ENCODE measurements at regions of chr3 and their contacts with region 1.

Region 1: DNA sequence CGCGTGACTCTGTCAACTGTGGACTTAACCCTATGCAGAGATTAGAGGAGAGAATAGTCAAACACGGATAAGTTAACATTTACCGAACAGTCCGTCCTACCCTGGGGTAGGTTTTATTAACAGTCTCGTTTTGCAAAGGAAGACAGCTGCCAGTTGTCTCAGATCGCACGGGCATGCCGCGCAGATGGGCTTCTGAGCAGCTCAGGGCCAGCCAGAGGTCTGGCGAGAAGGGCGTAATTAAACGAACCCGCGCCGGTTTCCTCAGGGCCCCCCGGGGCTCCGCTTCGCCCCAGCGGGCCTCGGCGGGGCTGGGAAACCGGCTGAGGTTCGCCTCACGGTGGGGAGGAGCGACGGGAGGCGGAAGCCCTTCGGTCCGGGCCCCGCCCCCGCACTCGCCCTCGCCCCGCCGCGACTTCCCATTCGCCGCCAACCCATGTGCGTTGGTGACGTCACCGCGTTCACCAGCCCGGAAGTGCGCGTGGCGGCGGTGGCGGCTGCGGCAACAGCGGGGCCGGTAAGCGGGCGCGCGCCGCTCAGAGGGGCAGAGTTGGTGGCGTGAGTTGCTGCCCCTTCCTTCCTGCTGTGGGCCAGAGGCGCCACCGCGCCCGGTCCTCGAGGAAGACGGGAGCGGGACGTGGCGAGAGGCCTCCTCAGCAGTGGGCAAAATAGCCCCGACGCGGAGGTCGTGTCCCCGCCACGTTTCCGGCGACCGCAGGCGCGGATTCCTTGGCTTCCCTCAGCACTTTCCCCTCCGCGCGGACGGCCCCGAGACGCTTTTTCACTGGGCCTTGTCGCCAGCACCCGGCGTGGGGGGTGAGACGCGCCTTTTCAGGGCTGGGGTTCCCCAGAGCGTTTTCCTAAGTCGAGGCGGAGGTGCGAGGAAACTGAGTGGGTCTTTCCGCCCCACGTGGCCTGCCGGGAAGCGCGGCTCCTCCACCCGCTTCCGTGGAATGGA is at the start of gene TRNT1:
- DNase-seq: peak; percentile 69
- ATAC-seq: peak; percentile 95
- H3K4me3 ChIP-seq: peak within 1 kb of the TSS; percentile 89
- H3K27ac ChIP-seq: peak within 1 kb of the TSS; percentile 87
- H3K4me1 ChIP-seq: peaks cover 9% of the 10 kb centered on the region; the same call in 1 of the 2 replicates
- H3K27me3 ChIP-seq: no peaks in the 10 kb centered on the region
- CTCF ChIP-seq: no peak
- EP300 ChIP-seq: no peak
- POLR2A ChIP-seq: peak; percentile 98
- RAD21 ChIP-seq: no peak
- polyA plus RNA-seq, gene TRNT1: 37.9 to 45.1 TPM

Region 2: GRCh38 chr3:3038201-3038991 is 88.4 kb before region 1 on chr3:
- CTCF ChIA-PET with region 1: no interaction called
- POLR2A ChIA-PET with region 1: no interaction called
- RAD21 ChIA-PET with region 1: no interaction called
- SMC1A ChIA-PET with region 1: no interaction called
- in situ Hi-C with region 1: no loop called
- intact Hi-C with region 1: loop called (anchors 5 kb)
- DNase-seq: peak; percentile 26
- ATAC-seq: peak; percentile 91
- H3K4me3 ChIP-seq: no peak overlapping the region
- H3K27ac ChIP-seq: no peak overlapping the region
- H3K4me1 ChIP-seq: no peaks in the 10 kb centered on the region; the same call in 1 of the 2 replicates
- H3K27me3 ChIP-seq: no peaks in the 10 kb centered on the region; a peak in 1 of 4 replicates
- CTCF ChIP-seq: no peak
- EP300 ChIP-seq: no peak
- POLR2A ChIP-seq: no peak
- RAD21 ChIP-seq: no peak

Region 3: GRCh38 chr3:3089017-3089416 is 37.7 kb before region 1 on chr3:
- CTCF ChIA-PET with region 1: no interaction called
- POLR2A ChIA-PET with region 1: interaction called, 4 read pairs
- RAD21 ChIA-PET with region 1: no interaction called
- SMC1A ChIA-PET with region 1: interaction called, 4 read pairs
- in situ Hi-C with region 1: no loop called
- intact Hi-C with region 1: loop called (anchors 2 kb)
- DNase-seq: peak; percentile 71
- ATAC-seq: peak; percentile 99
- H3K4me3 ChIP-seq: no peak overlapping the region
- H3K27ac ChIP-seq: no peak overlapping the region
- H3K4me1 ChIP-seq: peaks cover 22% of the 10 kb centered on the region
- H3K27me3 ChIP-seq: no peaks in the 10 kb centered on the region
- CTCF ChIP-seq: peak in 2 of 3 experiments; percentile 22 to 48; a peak in 4 of 6 replicates
- EP300 ChIP-seq: peak in 1 of 2 experiments; percentile 92; a peak in 2 of 4 replicates
- POLR2A ChIP-seq: no peak
- RAD21 ChIP-seq: 0 out of 2 replicates have a peak, but pooled peaks have one; percentile 9

Region 4: GRCh38 chr3:3179407-3180094 is 52.8 kb after region 1 on chr3 and contains the start of gene CRBN:
- CTCF ChIA-PET with region 1: no interaction called
- POLR2A ChIA-PET with region 1: no interaction called
- RAD21 ChIA-PET with region 1: no interaction called
- SMC1A ChIA-PET with region 1: no interaction called
- in situ Hi-C with region 1: no loop called
- intact Hi-C with region 1: loop called (anchors 2 kb)
- DNase-seq: peak; percentile 41
- ATAC-seq: peak; percentile 99
- H3K4me3 ChIP-seq: peak within 1 kb of the TSS; percentile 88
- H3K27ac ChIP-seq: peak within 1 kb of the TSS; percentile 67
- H3K4me1 ChIP-seq: peaks cover 8% of the 10 kb centered on the region
- H3K27me3 ChIP-seq: peaks cover 0 to 2% of the 10 kb centered on the region in 2 experiments; a peak in 1 of 4 replicates
- CTCF ChIP-seq: peak; percentile 94 to 98 (median 98)
- EP300 ChIP-seq: no peak
- POLR2A ChIP-seq: peak; percentile 98
- RAD21 ChIP-seq: peak; percentile 70
- polyA plus RNA-seq, gene CRBN: 110 to 115 TPM

Region 5: GRCh38 chr3:3545360-3545759 is 418.6 kb after region 1 on chr3:
- CTCF ChIA-PET with region 1: no interaction called
- POLR2A ChIA-PET with region 1: no interaction called
- RAD21 ChIA-PET with region 1: no interaction called
- SMC1A ChIA-PET with region 1: no interaction called
- in situ Hi-C with region 1: no loop called
- intact Hi-C with region 1: no loop called
- DNase-seq: no peak
- ATAC-seq: no peak
- H3K4me3 ChIP-seq: no peak overlapping the region
- H3K27ac ChIP-seq: no peak overlapping the region
- H3K4me1 ChIP-seq: no peaks in the 10 kb centered on the region
- H3K27me3 ChIP-seq: no peaks in the 10 kb centered on the region
- CTCF ChIP-seq: no peak
- EP300 ChIP-seq: no peak
- POLR2A ChIP-seq: no peak
- RAD21 ChIP-seq: no peak

Region 6: DNA sequence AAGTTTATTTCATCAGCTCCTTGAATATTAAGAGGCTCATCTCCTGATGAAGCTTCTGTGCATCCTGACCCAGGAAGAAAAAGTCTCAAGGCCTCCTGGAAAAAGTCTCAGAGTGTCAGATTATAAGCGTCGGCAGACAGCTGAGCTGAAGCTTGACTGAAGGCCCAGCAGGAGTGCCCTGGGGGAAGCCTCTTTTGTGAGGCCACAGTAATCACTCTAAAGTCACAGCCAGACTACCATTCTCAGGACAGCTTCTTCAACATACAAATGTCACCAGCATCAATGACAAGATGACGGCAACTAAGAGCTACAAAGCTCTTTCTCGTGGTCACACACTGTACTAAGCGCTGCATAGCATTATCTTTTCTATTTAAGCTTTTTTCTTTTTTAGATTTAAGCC is 599.8 kb after region 1 on chr3:
- CTCF ChIA-PET with region 1: no interaction called
- POLR2A ChIA-PET with region 1: no interaction called
- RAD21 ChIA-PET with region 1: no interaction called
- SMC1A ChIA-PET with region 1: no interaction called
- in situ Hi-C with region 1: no loop called
- intact Hi-C with region 1: no loop called
- DNase-seq: no peak
- ATAC-seq: no peak
- H3K4me3 ChIP-seq: no peak overlapping the region
- H3K27ac ChIP-seq: no peak overlapping the region
- H3K4me1 ChIP-seq: no peaks in the 10 kb centered on the region
- H3K27me3 ChIP-seq: no peaks in the 10 kb centered on the region
- CTCF ChIP-seq: no peak
- EP300 ChIP-seq: no peak
- POLR2A ChIP-seq: no peak
- RAD21 ChIP-seq: no peak

Measured in GM12878 (cell line).